Posterior cingulate gyrus (tissue), 11 donors: ENCODE measurements at regions of chr15 and their contacts with region 1.

Region 1: GRCh38 chr15:91852741-91853510 is 582 bp upstream of the SLCO3A1 start:
- DNase-seq: peak; percentile 65 to 97 (median 76)

Region 2: GRCh38 chr15:91302588-91303439 is 550.1 kb before region 1 on chr15:
- intact Hi-C with region 1: loop called (anchors 2 kb)
- DNase-seq: peak in 6 of 10 donors; percentile 27 to 85 (median 44)

Region 3: GRCh38 chr15:91522663-91523332 is 330.1 kb before region 1 on chr15:
- intact Hi-C with region 1: loop called (anchors 2 kb)
- DNase-seq: peak in 2 of 10 donors; percentile 41 to 56

Region 4: DNA sequence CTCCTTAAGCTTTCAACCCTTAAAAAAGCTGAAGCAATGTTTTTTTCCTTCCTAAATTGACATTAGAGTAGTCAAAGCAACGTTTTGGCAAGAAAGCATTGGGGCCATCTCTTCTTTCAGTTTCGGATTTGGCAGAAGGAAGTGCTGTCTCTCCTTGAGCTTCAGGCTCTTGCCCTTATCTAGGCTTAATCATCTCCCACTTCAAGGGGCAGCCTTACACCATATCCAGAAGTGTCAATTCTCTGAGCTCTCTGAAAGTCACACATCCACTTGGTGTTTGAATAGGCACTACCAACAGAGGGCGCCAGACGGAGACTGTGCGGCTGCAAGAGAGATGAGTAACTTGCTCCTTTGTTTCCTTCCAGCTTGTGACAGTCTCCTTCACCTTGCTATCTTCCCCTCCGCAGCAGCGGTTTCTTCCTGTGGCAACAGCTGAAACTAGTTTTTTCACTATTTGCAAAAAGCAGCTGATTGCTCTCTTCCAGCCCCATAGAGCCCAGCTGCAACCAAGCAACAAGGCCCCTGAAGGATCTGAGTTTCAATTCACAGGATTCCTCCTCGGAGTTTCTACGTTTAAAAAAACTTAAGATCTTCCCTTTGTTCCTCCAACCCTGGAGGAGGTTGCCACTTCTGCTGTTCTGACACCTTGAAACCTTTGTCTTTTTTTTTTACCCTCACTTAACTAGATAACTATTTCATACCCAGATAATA is 146.4 kb before region 1 on chr15:
- intact Hi-C with region 1: loop called (anchors 5 kb)
- DNase-seq: peak; percentile 53 to 96 (median 83)

Region 5: DNA sequence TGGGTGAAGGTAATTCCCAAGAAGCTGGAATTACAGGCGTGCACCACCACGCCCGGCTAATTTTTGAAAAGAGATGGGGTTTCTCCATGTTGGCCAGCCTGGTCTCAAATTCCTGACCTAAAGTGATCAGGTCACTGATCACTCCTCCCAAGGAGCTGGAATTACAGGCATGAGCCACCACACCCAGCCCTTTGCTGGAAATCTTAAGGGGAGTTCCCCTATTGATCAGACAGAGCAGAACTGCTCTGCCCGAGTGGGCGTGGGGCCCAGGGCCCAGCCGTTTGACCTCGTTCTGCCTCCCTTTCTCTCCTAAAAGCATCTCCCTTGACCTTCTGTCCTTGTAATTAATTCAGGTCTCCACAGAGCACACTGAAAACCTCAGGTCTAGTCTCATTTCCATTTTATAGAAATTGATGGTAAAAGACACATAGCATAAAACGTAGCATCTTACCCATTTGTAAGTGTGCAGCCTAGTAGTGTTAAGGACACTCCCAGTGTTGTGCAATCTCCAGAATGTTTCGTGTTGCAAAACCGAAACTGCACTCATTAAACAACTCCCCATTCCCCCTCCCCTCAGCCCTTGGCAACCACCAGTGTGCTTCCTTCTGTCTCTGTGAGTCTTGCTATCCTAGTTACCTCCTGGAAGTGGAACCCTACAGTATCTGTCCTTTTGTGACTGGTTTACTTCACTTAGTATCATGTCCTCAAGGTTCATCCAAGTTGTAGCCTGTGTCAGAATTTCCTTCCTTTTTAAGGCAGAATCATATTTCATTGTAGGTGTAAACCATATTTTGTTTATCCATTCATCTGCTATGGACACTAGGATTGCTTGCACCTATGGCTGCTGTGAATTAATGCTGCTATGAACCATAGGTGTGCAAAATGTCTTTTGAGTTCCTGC is 90.0 kb after region 1 on chr15:
- intact Hi-C with region 1: loop called (anchors 1 kb)
- DNase-seq: peak in 3 of 10 donors; percentile 33 to 47 (median 39)

Region 6: DNA sequence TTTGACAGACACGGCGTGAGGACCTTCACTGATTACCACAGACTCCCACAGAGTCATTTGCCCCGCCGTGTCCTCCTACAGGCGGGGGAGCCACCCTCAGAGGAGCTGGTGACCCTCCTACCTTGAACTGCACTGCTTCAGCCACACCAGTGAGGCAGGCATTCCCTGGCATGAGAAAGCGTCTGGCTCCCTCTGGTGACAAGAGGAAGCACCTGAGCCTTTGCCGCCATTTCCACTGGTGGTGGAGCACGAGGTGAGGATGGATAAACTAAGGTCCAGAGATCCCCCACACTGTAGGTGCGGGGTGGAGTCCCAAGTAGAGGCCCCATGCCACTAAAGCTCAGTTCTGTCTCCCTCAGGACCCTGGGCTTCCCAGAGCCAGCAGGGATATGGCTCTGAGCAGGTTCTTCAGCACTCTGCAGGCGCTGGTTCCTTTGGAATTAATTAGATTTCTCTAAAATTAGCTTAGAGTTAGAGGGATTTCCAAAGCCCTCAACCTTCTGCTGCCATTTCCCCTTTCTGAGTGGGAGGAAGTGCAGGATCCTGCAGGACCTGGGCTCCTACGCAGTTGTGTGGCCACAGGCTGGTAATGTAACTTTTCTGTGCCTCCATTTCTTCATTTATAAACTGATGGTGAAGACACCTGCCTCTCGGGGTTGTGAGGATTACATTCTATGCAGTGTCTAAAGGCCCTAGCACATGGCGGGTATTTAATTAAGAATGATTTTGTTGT is 224.6 kb after region 1 on chr15:
- intact Hi-C with region 1: loop called (anchors 2 kb)
- DNase-seq: peak; percentile 65 to 97 (median 78)